Heart right ventricle (tissue), 16 donors: ENCODE measurements at regions of chr7 and their contacts with region 1.

Region 1: DNA sequence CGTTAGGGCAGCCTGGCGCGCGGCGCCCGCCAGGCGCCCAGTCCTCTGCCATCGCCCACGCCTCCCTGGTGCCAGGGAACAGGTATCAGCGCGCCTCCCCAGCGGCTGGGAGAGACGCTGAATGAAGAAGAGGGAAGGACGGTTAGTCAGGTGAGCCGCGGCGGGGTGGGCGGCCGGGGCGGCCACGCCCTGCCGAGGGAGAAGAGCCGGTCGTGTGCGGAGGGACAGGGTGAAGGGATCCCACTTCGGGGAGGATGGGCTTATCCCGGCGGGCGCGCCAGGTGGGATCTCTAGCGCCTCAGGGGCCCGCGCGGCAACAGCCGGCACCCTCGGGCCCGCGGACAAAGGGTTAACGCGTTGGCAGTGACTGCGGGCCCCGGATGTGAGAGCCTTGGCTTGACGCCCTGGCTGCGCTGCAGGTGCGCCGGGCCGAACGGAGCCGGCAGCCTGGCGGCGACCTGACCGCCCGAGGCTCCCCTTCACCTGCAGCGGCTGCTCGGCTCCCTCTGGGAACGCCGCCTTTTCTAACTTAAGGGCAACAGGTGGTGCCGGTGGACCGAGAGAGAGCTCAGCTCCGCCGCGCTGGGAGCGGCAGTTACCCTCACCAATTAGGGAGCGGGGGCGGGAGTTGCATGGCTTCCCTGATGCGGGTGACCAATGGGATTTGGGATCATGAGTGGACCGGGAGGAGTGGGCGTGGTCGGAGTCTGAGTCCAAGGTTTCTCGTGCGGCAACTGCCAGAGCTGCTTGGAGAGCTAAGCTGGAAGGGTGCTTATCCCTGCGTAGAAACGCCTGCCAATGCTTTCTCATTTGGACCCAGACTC is at the start of gene ARL4A:
- DNase-seq: peak; percentile 97 to 100
- ATAC-seq: peak; percentile 95 to 98 (median 98)
- H3K4me3 ChIP-seq: peak within 1 kb of the TSS; percentile 74 to 99 (median 90)
- H3K27ac ChIP-seq: peak within 1 kb of the TSS; percentile 51 to 92 (median 90)
- H3K4me1 ChIP-seq: peaks cover 0 to 44% (median 21%) of the 10 kb centered on the region in 9 donors
- H3K27me3 ChIP-seq: no peaks in the 10 kb centered on the region
- CTCF ChIP-seq: peak in 8 of 9 donors; percentile 27 to 72 (median 51)
- total RNA-seq, gene ARL4A: 6.9 to 21.4 (median 12.9) TPM

Region 2: GRCh38 chr7:12423355-12423994 is 263.6 kb before region 1 on chr7:
- intact Hi-C with region 1: no loop called
- DNase-seq: no peak
- ATAC-seq: no peak
- H3K4me3 ChIP-seq: no peak overlapping the region
- H3K27ac ChIP-seq: no peak overlapping the region
- H3K4me1 ChIP-seq: no peaks in the 10 kb centered on the region
- H3K27me3 ChIP-seq: no peaks in the 10 kb centered on the region
- CTCF ChIP-seq: no peak

Region 3: DNA sequence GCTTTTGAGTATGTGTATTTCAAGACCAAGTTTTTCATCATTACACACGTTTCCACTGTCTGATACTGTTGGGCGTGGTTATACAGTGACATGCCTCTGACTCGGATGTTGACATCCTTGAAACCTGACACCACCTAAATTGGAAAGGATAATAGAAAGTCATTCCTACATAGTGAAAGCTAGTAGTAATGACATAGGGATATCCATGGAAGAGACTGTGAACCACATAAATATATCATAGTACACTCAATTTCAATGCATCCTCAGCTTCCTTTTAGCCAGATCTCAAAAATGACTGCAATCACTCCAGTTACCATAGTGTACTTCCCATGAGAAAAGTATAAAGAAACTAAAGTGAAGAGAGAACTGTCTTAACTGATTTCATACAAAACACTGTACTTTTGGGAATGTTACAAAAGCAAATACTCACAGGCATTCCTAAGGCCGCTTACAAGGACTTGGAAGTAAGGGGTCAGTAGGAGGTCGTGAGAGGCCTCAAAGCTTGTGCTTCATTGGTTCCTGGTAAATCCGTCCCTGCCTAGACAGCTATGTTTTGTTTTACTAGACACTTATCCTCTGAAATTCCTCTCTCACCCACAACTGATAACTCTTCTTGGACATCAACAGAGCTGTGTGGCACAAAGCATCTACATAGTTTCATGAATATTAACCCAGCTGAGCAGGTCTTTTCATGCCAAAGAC is 211.6 kb before region 1 on chr7:
- intact Hi-C with region 1: no loop called
- DNase-seq: no peak
- ATAC-seq: no peak
- H3K4me3 ChIP-seq: no peak overlapping the region
- H3K27ac ChIP-seq: no peak overlapping the region
- H3K4me1 ChIP-seq: no peaks in the 10 kb centered on the region
- H3K27me3 ChIP-seq: no peaks in the 10 kb centered on the region
- CTCF ChIP-seq: no peak

Region 4: DNA sequence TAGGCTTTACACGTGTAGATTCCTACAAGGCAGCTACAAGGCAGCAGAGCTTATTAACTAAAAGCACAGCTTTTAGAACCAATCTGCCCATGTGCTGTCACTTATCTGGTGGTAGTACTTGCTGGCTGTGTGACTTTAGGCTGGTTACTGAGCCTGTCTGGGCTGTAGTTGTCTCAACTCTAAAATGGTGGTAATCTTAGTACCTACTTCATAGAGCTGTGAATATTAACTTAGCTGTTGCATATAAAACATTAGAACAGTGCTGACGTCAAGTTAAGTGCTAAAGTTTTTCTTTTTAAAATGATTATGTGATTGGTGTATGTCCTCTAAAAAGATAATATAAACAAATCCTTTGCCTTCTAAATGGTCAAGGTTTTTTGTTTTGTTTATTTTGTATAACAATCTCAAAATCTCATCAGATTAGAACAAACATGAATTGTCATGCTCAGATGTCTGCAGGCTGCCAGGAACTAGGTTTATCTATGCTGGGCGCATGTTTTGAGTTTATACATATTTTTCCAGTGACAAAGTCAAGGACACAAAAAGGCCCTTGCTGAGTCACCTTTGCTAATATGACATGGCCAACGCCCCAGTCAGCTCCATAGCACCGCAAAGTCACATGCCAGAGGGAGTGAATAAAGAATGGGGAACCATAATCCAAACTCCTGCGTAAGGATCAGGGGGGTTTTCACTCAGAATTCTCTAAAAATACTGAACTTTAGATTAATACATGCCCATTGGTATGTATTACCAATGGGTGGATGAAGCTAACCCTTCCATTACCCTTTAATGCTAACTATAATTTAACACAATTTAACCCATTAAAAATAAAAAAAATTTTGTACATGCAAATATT is 39.5 kb before region 1 on chr7:
- intact Hi-C with region 1: loop called in 1 of 10 experiments (anchors 5 kb)
- DNase-seq: no peak
- ATAC-seq: no peak
- H3K4me3 ChIP-seq: no peak overlapping the region
- H3K27ac ChIP-seq: no peak overlapping the region
- H3K4me1 ChIP-seq: no peaks in the 10 kb centered on the region
- H3K27me3 ChIP-seq: no peaks in the 10 kb centered on the region
- CTCF ChIP-seq: no peak

Region 5: GRCh38 chr7:12729112-12729511 is 42.0 kb after region 1 on chr7:
- intact Hi-C with region 1: loop called in 4 of 10 experiments (anchors 1 to 5 kb)
- DNase-seq: peak; percentile 71 to 88
- ATAC-seq: peak; percentile 73 to 90 (median 84)
- H3K4me3 ChIP-seq: peak overlapping the region in 2 of 10 donors; percentile 6 to 14
- H3K27ac ChIP-seq: peak overlapping the region; percentile 19 to 83 (median 68)
- H3K4me1 ChIP-seq: peaks cover 0 to 57% (median 41%) of the 10 kb centered on the region in 9 donors
- H3K27me3 ChIP-seq: no peaks in the 10 kb centered on the region
- CTCF ChIP-seq: no peak

Region 6: GRCh38 chr7:12759151-12759550 is 72.0 kb after region 1 on chr7:
- intact Hi-C with region 1: no loop called
- DNase-seq: no peak
- ATAC-seq: no peak
- H3K4me3 ChIP-seq: no peak overlapping the region
- H3K27ac ChIP-seq: no peak overlapping the region
- H3K4me1 ChIP-seq: peaks cover 0 to 12% (median 3%) of the 10 kb centered on the region in 9 donors
- H3K27me3 ChIP-seq: no peaks in the 10 kb centered on the region
- CTCF ChIP-seq: no peak

Region 7: DNA sequence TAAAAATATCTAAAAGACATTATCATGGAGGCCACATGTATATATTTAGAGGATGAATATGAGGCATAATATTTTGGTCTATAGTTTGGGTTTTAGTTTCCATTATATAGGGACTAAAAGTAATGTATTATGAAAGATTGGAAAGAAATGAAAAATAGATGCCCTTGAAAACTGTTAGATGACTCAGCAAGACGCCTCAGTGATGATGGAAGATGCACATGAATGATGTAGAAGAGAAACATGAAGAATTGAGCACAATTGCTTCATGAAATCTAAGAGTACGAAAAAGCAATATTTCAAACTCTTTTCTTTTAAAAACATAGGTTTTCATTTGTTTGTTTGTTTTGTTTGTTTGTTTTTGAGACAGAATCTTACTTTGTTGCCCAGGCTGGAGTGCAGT is 90.2 kb after region 1 on chr7:
- intact Hi-C with region 1: loop called in 2 of 10 experiments (anchors 5 to 10 kb)
- DNase-seq: no peak
- ATAC-seq: no peak
- H3K4me3 ChIP-seq: no peak overlapping the region
- H3K27ac ChIP-seq: no peak overlapping the region
- H3K4me1 ChIP-seq: no peaks in the 10 kb centered on the region
- H3K27me3 ChIP-seq: no peaks in the 10 kb centered on the region
- CTCF ChIP-seq: no peak

Region 8: DNA sequence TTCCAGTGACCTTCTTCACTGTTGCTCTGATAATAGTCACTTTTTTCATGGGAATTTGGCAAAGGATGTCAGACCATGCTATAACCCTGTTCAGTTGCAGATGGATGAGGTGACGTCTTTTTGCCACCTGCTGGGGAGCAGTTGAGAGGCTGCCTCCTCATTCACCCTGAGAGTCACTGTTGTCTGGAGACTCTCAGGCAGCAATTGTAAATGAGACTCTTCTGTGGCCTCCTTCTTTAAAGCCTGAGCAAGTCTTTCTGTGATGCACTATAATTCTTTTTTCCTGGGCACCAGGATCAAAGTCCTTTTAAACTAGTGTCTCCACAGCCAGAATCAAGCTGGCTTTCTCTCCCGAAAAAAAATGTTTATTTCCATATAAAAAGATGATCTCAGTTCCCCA is 345.5 kb after region 1 on chr7:
- intact Hi-C with region 1: loop called in 1 of 10 experiments (anchors 10 kb)
- DNase-seq: no peak
- ATAC-seq: peak in 5 of 8 donors; percentile 39 to 61 (median 47)
- H3K4me3 ChIP-seq: no peak overlapping the region
- H3K27ac ChIP-seq: no peak overlapping the region
- H3K4me1 ChIP-seq: peaks cover 0 to 16% (median 9%) of the 10 kb centered on the region in 9 donors
- H3K27me3 ChIP-seq: no peaks in the 10 kb centered on the region
- CTCF ChIP-seq: peak in 4 of 9 donors; percentile 9 to 18 (median 14)

Region 9: GRCh38 chr7:13117103-13117502 is 430.0 kb after region 1 on chr7:
- intact Hi-C with region 1: loop called in 6 of 10 experiments (anchors 5 to 10 kb)
- DNase-seq: no peak
- ATAC-seq: peak in 1 of 8 donors; percentile 33
- H3K4me3 ChIP-seq: no peak overlapping the region
- H3K27ac ChIP-seq: no peak overlapping the region
- H3K4me1 ChIP-seq: peaks cover 0 to 4% (median 0%) of the 10 kb centered on the region in 9 donors
- H3K27me3 ChIP-seq: no peaks in the 10 kb centered on the region
- CTCF ChIP-seq: peak in 6 of 9 donors; percentile 30 to 58 (median 43)

Region 10: GRCh38 chr7:13262929-13263530 is 575.9 kb after region 1 on chr7:
- intact Hi-C with region 1: loop called in 9 of 10 experiments (anchors 2 to 10 kb)
- DNase-seq: no peak
- ATAC-seq: peak in 5 of 8 donors; percentile 41 to 71 (median 58)
- H3K4me3 ChIP-seq: no peak overlapping the region
- H3K27ac ChIP-seq: no peak overlapping the region
- H3K4me1 ChIP-seq: no peaks in the 10 kb centered on the region
- H3K27me3 ChIP-seq: no peaks in the 10 kb centered on the region
- CTCF ChIP-seq: peak; percentile 36 to 78 (median 64)